A673 (cell line): ENCODE measurements at regions of chr3 and their contacts with region 1.

Region 1: GRCh38 chr3:193157051-193157450 is 84.0 kb upstream of the PLAAT1 start:
- DNase-seq: no peak
- H3K4me3 ChIP-seq: no peak overlapping the region
- H3K27ac ChIP-seq: no peak overlapping the region
- H3K4me1 ChIP-seq: no peaks in the 10 kb centered on the region
- H3K27me3 ChIP-seq: peaks cover 4% of the 10 kb centered on the region
- CTCF ChIP-seq: no peak

Region 2: DNA sequence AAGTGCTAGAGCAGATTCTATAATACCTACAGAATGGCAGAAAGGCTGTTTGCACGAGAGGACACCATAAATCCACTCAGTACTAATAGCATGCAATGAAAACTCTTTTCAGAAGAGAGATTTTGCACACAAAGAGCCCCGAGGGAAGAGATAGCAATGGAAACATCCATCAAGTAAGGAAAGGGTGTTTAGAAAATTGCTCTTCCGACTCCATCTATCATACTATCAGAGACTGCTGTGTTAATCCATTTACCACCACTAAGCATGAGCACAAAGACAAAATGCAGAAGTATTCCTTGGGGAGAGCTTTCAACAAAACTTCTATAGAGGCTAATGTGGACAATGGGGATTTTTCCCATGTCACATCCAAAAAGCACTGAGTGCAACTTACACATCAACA is 11.9 kb after region 1 on chr3:
- CTCF ChIA-PET with region 1: no interaction called
- POLR2A ChIA-PET with region 1: no interaction called
- intact Hi-C with region 1: loop called (anchors 1 kb)
- DNase-seq: peak; percentile 78
- H3K4me3 ChIP-seq: no peak overlapping the region
- H3K27ac ChIP-seq: no peak overlapping the region
- H3K4me1 ChIP-seq: no peaks in the 10 kb centered on the region
- H3K27me3 ChIP-seq: peaks cover 18% of the 10 kb centered on the region
- CTCF ChIP-seq: no peak